Activated CD8-positive, alpha-beta T cell treated with anti-CD3 and anti-CD28 coated beads, Interleukin-2, amount 10 ng/mL, durations not matched to agents 7 days and 5 days (primary cell): ENCODE measurements at regions of chr3 and their contacts with region 1.

Region 1: DNA sequence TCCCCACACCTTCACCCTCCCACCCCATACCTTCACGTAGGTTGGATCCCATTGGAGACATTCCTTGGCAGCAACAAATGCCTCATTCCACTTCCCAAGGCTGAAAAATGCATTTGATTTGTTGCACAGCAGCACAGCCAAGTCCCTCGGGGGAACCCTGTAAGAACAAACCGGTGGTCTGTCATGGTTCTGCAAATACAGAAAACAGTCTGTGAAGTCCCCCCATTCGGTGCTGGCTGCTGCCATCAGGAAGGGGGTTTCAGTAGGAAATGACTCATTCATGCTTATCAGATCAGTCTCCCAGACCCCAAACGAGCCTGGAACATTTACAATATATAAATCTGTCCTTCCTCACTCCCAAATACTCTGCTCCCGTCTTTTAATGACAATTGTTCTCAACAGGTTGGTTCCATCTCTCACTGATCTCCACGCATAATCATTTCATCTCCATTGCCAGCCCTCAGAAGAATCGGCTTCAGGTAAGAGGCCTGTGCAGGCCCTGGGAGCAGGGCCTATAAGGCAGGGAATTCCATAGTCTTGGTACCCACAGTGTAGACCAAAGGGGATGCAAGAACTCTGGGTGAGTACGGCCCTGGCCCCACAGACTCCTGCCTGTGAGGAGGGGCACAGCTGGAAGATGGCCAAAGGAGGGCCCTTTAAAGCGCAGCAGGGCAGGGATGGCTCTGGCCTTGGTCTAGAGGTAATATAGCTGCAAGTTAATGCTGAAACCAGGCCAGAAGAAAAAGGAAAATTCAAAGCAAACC is 41.6 kb downstream of the TRANK1 start:
- DNase-seq: no peak
- ATAC-seq: no peak
- H3K4me3 Mint-ChIP-seq: no peak overlapping the region
- H3K27ac Mint-ChIP-seq: peak overlapping the region; percentile 1
- H3K4me1 Mint-ChIP-seq: peaks cover 57% of the 10 kb centered on the region
- H3K27me3 Mint-ChIP-seq: no peaks in the 10 kb centered on the region

Region 2: GRCh38 chr3:36893137-36893557 is 10.2 kb before region 1 on chr3:
- CTCF ChIA-PET with region 1: interaction called, 14 read pairs
- POLR2A ChIA-PET with region 1: interaction called, 7 read pairs
- DNase-seq: peak; percentile 46
- ATAC-seq: peak; percentile 73
- H3K4me3 Mint-ChIP-seq: no peak overlapping the region
- H3K27ac Mint-ChIP-seq: peak overlapping the region; percentile 72
- H3K4me1 Mint-ChIP-seq: peaks cover 39% of the 10 kb centered on the region
- H3K27me3 Mint-ChIP-seq: no peaks in the 10 kb centered on the region